B cell (primary cell): ENCODE measurements at regions of chr2 and their contacts with region 1.

Region 1: DNA sequence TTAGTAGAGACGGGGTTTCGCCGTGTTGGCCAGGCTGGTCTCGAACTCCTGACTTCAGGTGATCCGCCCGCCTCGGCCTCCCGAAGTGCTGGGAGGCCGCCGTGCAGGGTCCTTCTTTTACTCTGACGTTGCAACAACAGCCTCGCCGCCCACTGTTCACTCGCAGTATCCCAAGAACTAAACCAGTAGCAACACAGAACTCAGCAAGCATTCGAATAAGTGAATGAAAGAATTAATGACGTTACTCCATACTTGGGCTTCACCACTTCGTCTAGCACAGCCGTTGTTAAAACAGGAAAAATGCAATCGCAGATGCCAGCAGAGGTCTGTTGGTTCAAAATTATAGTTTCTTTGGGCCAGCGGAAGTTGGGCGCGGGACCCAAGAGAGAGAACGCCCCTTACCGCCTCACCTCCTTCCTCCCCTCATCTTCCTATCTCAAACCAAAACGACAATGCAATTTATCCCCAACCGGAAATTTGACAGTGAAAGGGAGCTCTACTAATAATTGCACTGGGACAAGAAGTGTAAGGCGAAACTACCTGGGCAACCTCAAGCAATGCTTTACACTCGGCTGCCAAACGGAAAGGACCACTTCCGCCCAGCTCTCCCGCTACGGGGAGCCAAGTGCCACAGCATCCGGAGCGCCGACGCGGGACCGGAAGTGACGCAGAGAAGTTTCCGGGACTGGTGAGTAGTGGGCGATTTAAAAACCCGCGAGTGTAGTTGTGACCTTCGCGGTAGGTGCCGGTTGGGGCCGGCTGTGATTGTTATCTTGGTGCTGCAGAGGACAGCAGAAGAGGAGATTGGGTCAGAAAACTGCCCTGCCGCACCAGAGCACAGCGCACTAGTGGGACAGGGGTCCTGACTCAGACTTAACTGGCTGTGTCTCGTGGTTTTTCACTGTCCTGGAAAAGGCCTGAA is at the starts of genes NIF3L1 and PPIL3:
- DNase-seq: peak; percentile 98
- ATAC-seq: peak; percentile 81
- H3K4me3 ChIP-seq: peak within 1 kb of the TSS; percentile 76 to 99 (median 87)
- H3K4me3 Mint-ChIP-seq: peak within 1 kb of the TSS; percentile 95
- H3K27ac ChIP-seq: peak within 1 kb of the TSS; percentile 90 to 93
- H3K27ac Mint-ChIP-seq: peak within 1 kb of the TSS; percentile 98
- H3K4me1 ChIP-seq: peaks cover 15 to 28% of the 10 kb centered on the region in 2 donors
- H3K4me1 Mint-ChIP-seq: peaks cover 43% of the 10 kb centered on the region
- H3K27me3 ChIP-seq: no peaks in the 10 kb centered on the region
- H3K27me3 Mint-ChIP-seq: no peaks in the 10 kb centered on the region
- CTCF ChIP-seq: no peak
- total RNA-seq, gene NIF3L1: 26.7 and 32.9 TPM in 2 replicates
- total RNA-seq, gene PPIL3: 55.5 and 57.9 TPM in 2 replicates

Region 2: DNA sequence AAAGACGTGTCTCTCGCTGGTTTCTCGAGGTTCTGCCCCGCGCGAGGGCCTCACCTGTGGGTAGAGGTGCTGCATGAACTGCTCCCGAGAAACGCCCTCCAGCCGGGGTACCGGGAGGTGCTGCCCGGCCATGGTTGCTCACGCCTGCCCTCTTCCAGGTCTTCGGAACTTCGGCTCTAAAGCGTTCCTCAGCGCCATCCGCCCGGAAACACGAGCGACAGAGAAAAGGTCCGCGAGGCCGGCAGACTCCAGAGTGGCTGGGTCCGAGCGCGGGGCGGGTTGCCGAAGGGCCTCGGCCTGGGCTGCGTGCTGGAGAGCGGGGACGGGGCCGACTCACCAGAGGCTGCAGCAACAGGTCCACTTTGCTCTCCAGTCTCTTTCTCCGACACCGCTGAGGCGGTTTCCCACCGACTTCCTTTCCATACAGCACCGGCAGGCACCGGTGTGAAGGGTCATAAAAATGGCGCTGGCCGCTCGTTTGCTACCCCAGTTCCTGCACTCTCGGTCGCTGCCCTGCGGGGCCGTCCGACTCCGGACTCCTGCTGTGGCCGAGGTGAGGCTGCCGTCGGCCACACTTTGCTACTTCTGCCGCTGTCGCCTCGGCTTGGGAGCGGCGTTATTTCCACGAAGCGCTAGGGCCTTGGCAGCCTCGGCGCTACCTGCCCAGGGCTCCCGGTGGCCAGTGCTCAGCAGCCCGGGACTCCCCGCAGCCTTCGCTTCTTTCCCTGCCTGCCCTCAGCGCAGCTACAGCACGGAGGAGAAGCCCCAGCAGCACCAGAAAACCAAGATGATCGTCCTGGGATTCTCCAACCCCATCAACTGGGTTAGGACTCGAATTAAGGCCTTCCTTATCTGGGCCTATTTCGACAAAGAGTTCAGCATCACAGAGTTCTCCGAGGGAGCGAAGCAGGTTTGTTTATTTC is 933.4 kb before region 1 on chr2 and contains the starts of genes MAIP1 and TYW5:
- CTCF ChIA-PET with region 1: no interaction called
- POLR2A ChIA-PET with region 1: no interaction called
- intact Hi-C with region 1: loop called (anchors 5 kb)
- DNase-seq: peak; percentile 88
- ATAC-seq: peak; percentile 87
- H3K4me3 ChIP-seq: peak within 1 kb of the TSS; percentile 70 to 97 (median 75)
- H3K4me3 Mint-ChIP-seq: peak within 1 kb of the TSS; percentile 98
- H3K27ac ChIP-seq: peak within 1 kb of the TSS; percentile 59 to 85
- H3K27ac Mint-ChIP-seq: peak within 1 kb of the TSS; percentile 93
- H3K4me1 ChIP-seq: peaks cover 24 to 27% of the 10 kb centered on the region in 2 donors
- H3K4me1 Mint-ChIP-seq: peaks cover 52% of the 10 kb centered on the region
- H3K27me3 ChIP-seq: no peaks in the 10 kb centered on the region
- H3K27me3 Mint-ChIP-seq: no peaks in the 10 kb centered on the region
- CTCF ChIP-seq: no peak
- total RNA-seq, gene MAIP1: 15.7 and 15.8 TPM in 2 replicates
- total RNA-seq, gene TYW5: 15.0 and 15.4 TPM in 2 replicates

Region 3: GRCh38 chr2:200713003-200713703 is 175.8 kb before region 1 on chr2:
- CTCF ChIA-PET with region 1: interaction called, 3 read pairs
- POLR2A ChIA-PET with region 1: interaction called, 7 read pairs
- intact Hi-C with region 1: loop called (anchors 1 kb)
- DNase-seq: peak; percentile 91
- ATAC-seq: peak; percentile 99
- H3K4me3 ChIP-seq: peak overlapping the region in 4 of 5 experiments; percentile 5 to 52 (median 16)
- H3K4me3 Mint-ChIP-seq: peak overlapping the region; percentile 83
- H3K27ac ChIP-seq: peak overlapping the region; percentile 82 to 93
- H3K27ac Mint-ChIP-seq: peak overlapping the region; percentile 98
- H3K4me1 ChIP-seq: peaks cover 5 to 6% of the 10 kb centered on the region in 2 donors
- H3K4me1 Mint-ChIP-seq: peaks cover 15% of the 10 kb centered on the region
- H3K27me3 ChIP-seq: no peaks in the 10 kb centered on the region
- H3K27me3 Mint-ChIP-seq: peaks cover 10% of the 10 kb centered on the region
- CTCF ChIP-seq: peak; percentile 83

Region 4: DNA sequence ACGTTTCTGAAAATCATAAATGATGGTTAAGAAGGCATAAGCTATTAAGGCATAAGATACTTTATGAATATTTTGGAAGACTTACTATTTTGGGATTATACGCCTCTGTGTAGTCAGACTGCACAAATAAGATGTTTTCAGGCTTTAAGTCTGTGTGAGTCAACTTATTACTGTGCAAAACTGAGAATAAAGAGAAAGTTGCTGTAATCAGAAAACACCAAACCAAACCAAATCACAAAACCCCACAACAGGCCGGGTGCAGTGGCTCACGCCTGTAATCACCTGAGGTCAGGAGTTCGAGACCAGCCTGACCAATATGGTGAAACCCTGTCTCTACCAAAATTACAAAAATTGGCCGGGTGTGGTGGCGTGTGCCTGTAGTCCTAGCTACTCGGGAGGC is 32.2 kb before region 1 on chr2:
- CTCF ChIA-PET with region 1: no interaction called
- POLR2A ChIA-PET with region 1: no interaction called
- intact Hi-C with region 1: no loop called
- DNase-seq: no peak
- ATAC-seq: no peak
- H3K4me3 ChIP-seq: no peak overlapping the region
- H3K4me3 Mint-ChIP-seq: no peak overlapping the region
- H3K27ac ChIP-seq: no peak overlapping the region
- H3K27ac Mint-ChIP-seq: no peak overlapping the region
- H3K4me1 ChIP-seq: peaks cover 23 to 37% of the 10 kb centered on the region in 2 donors
- H3K4me1 Mint-ChIP-seq: peaks cover 37% of the 10 kb centered on the region
- H3K27me3 ChIP-seq: no peaks in the 10 kb centered on the region
- H3K27me3 Mint-ChIP-seq: no peaks in the 10 kb centered on the region
- CTCF ChIP-seq: no peak

Region 5: GRCh38 chr2:200901459-200902072 is 12.6 kb after region 1 on chr2:
- CTCF ChIA-PET with region 1: interaction called, 11 read pairs
- POLR2A ChIA-PET with region 1: no interaction called
- intact Hi-C with region 1: loop called (anchors 1 kb)
- DNase-seq: peak; percentile 86
- ATAC-seq: peak; percentile 100
- H3K4me3 ChIP-seq: no peak overlapping the region
- H3K4me3 Mint-ChIP-seq: no peak overlapping the region
- H3K27ac ChIP-seq: peak overlapping the region in 1 of 2 donors; percentile 40
- H3K27ac Mint-ChIP-seq: no peak overlapping the region
- H3K4me1 ChIP-seq: no peaks in the 10 kb centered on the region
- H3K4me1 Mint-ChIP-seq: peaks cover 4% of the 10 kb centered on the region
- H3K27me3 ChIP-seq: no peaks in the 10 kb centered on the region
- H3K27me3 Mint-ChIP-seq: no peaks in the 10 kb centered on the region
- CTCF ChIP-seq: peak; percentile 94

Region 6: GRCh38 chr2:201257956-201258665 is 369.1 kb after region 1 on chr2:
- CTCF ChIA-PET with region 1: no interaction called
- POLR2A ChIA-PET with region 1: no interaction called
- intact Hi-C with region 1: loop called (anchors 1 kb)
- DNase-seq: peak; percentile 94
- ATAC-seq: peak; percentile 67
- H3K4me3 ChIP-seq: peak overlapping the region; percentile 39 to 90 (median 58)
- H3K4me3 Mint-ChIP-seq: peak overlapping the region; percentile 87
- H3K27ac ChIP-seq: peak overlapping the region; percentile 97 to 98
- H3K27ac Mint-ChIP-seq: peak overlapping the region; percentile 99
- H3K4me1 ChIP-seq: peaks cover 58 to 84% of the 10 kb centered on the region in 2 donors
- H3K4me1 Mint-ChIP-seq: peaks cover 73% of the 10 kb centered on the region
- H3K27me3 ChIP-seq: no peaks in the 10 kb centered on the region
- H3K27me3 Mint-ChIP-seq: no peaks in the 10 kb centered on the region
- CTCF ChIP-seq: no peak